Caco-2 (cell line): ENCODE measurements at regions of chr1 and their contacts with region 1.

Region 1: GRCh38 chr1:160193091-160193819 is 2.9 kb downstream of the CASQ1 start:
- DNase-seq: peak; percentile 83 to 90
- H3K4me3 ChIP-seq: no peak overlapping the region
- H3K4me3 Mint-ChIP-seq: no peak overlapping the region
- H3K27ac Mint-ChIP-seq: no peak overlapping the region
- H3K4me1 ChIP-seq: peaks cover 17% of the 10 kb centered on the region
- H3K4me1 Mint-ChIP-seq: no peaks in the 10 kb centered on the region
- H3K27me3 ChIP-seq: no peaks in the 10 kb centered on the region
- H3K27me3 Mint-ChIP-seq: no peaks in the 10 kb centered on the region
- CTCF ChIP-seq: peak; percentile 86 to 91

Region 2: DNA sequence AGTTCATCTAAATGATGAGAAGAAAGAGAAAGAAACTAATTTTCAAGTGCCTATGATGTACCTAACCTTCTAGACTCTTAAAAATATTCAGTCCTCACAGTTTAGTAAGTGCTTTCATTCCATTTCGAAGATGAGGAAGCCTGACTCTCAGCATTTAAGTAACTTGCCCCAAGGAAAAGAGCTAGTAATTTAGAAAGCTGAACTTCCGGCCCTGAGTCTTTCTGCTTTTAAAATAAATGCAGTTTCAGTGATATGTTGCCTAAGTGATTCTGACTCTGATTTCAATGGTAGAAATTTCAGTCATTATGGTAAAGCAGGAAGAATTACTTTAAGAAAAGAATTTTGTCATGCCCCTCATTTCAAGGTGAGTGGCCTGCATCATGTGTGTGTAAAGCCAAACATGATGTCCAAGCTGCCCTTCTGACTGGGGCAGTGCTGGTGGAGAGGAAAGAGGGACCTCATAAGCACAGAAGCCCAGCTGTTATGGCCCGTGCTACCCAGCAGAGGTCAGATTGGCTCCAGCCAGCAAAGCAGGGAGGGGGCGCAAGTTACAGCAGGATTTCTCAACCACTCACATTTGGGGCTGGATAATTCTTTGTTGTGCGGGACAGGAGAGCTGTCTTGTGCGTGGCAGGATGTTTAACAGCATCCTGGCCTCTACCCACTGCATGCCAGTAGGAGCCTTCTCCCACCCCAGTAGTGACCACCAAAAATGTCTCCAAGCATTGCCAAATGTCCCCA is 31.1 kb before region 1 on chr1:
- CTCF ChIA-PET with region 1: interaction called, 7 read pairs
- POLR2A ChIA-PET with region 1: no interaction called
- intact Hi-C with region 1: loop called (anchors 2 kb)
- DNase-seq: peak in 1 of 2 experiments; percentile 40
- H3K4me3 ChIP-seq: no peak overlapping the region
- H3K4me3 Mint-ChIP-seq: no peak overlapping the region
- H3K27ac Mint-ChIP-seq: no peak overlapping the region
- H3K4me1 ChIP-seq: peaks cover 16% of the 10 kb centered on the region; the same call in 1 of the 2 replicates
- H3K4me1 Mint-ChIP-seq: no peaks in the 10 kb centered on the region
- H3K27me3 ChIP-seq: no peaks in the 10 kb centered on the region
- H3K27me3 Mint-ChIP-seq: peaks cover 2% of the 10 kb centered on the region
- CTCF ChIP-seq: peak; percentile 41 to 61

Region 3: DNA sequence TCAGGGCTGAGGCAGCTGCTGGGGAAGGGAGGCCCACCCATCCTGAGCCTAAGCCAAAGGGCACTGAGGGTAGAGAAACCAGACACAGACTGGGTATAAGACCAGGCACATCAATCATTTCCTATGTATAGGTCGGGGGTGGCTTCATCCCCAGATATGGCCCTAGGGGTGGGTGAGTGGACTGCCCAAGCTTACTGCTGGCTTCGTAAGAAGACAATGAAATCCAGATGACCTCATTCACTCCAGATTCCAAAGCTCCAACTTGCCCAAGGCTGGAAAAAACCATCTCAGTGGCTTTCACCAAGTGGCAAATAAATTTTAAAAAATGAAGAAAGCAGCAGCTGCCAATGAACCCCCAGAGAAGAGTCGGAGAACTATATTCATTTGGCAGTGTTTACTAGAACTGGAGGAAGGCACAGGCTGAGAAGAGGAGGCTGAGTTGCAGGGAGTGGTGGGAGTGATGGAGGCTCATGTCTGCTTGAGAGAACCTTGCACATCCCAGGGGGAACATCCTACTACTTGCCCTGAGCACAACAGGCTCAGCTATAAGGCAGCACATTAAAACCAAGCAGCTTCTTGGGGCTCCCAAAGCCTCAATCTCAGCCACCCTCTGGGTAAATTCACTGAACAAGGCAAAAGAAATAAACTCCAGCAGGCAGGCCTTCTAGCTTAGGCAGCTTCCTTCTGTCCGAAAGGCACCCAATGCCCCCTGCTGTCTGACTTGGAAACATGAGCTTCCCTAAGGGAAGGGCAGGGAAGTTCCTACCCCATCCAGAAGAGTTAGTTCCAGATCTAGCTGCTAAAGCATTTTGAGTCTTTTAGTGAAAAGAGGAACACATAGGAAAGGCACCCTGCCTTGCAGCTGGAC is 26.0 kb after region 1 on chr1:
- CTCF ChIA-PET with region 1: interaction called, 106 read pairs
- POLR2A ChIA-PET with region 1: no interaction called
- intact Hi-C with region 1: loop called (anchors 1 kb)
- DNase-seq: peak; percentile 62 to 69
- H3K4me3 ChIP-seq: no peak overlapping the region
- H3K4me3 Mint-ChIP-seq: no peak overlapping the region
- H3K27ac Mint-ChIP-seq: no peak overlapping the region
- H3K4me1 ChIP-seq: 0 out of 2 replicates have a peak, but pooled peaks cover 6% of the 10 kb centered on the region
- H3K4me1 Mint-ChIP-seq: peaks cover 9% of the 10 kb centered on the region
- H3K27me3 ChIP-seq: no peaks in the 10 kb centered on the region
- H3K27me3 Mint-ChIP-seq: no peaks in the 10 kb centered on the region
- CTCF ChIP-seq: peak; percentile 62 to 67

Region 4: GRCh38 chr1:160261893-160262794 is 68.9 kb after region 1 on chr1 and contains the start of gene DCAF8:
- CTCF ChIA-PET with region 1: interaction called, 10 read pairs
- POLR2A ChIA-PET with region 1: no interaction called
- intact Hi-C with region 1: no loop called
- DNase-seq: peak; percentile 98
- H3K4me3 ChIP-seq: peak within 1 kb of the TSS; percentile 99
- H3K4me3 Mint-ChIP-seq: peak within 1 kb of the TSS; percentile 92
- H3K27ac Mint-ChIP-seq: peak within 1 kb of the TSS; percentile 97
- H3K4me1 ChIP-seq: no peaks in the 10 kb centered on the region
- H3K4me1 Mint-ChIP-seq: peaks cover 15% of the 10 kb centered on the region
- H3K27me3 ChIP-seq: no peaks in the 10 kb centered on the region
- H3K27me3 Mint-ChIP-seq: no peaks in the 10 kb centered on the region
- CTCF ChIP-seq: no peak
- total RNA-seq, gene DCAF8: 112 and 116 TPM in 2 replicates

Region 5: DNA sequence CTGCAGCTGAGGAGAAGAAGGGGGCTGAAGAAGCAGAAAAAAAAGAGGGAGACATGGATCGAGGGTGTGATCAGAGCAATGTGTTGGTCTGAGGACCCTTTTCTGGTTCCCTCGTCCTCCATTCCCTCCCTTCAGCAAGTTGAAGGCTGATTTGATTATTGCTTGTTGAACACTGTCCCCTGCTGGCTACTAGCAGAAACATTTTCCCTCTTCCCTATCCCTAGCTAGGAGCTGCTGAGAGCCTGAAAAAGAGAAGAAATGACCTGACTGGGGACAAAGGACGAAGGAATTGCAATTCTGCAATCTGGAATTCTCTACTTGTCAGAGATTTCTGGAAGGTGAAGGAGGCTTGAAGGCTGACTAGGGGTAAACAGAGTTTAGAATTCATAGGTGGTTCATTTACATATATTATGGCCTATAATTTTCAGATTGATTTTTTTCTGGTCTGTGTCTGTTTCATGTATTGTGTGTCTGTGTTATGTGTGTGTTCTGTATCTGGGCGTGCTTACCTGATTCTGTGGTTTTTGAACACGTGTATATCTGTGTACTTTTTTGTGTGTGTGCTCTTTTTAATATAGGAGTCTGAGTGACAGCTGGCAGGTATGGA is 183.4 kb after region 1 on chr1:
- CTCF ChIA-PET with region 1: interaction called, 4 read pairs
- POLR2A ChIA-PET with region 1: no interaction called
- intact Hi-C with region 1: loop called (anchors 1 kb)
- DNase-seq: peak; percentile 51 to 62
- H3K4me3 ChIP-seq: no peak overlapping the region
- H3K4me3 Mint-ChIP-seq: no peak overlapping the region
- H3K27ac Mint-ChIP-seq: no peak overlapping the region
- H3K4me1 ChIP-seq: no peaks in the 10 kb centered on the region
- H3K4me1 Mint-ChIP-seq: peaks cover 13% of the 10 kb centered on the region
- H3K27me3 ChIP-seq: no peaks in the 10 kb centered on the region
- H3K27me3 Mint-ChIP-seq: peaks cover 6% of the 10 kb centered on the region
- CTCF ChIP-seq: peak; percentile 67 to 91